WTC11 (cell line): ENCODE measurements at regions of chr1 and their contacts with region 1.

Region 1: GRCh38 chr1:182962554-182963115 is 9.7 kb upstream of the SHCBP1L start:
- DNase-seq: peak; percentile 69
- ATAC-seq: peak; percentile 87
- H3K4me3 Mint-ChIP-seq: peak overlapping the region; percentile 5; the same call in 1 of the 2 replicates
- H3K27ac Mint-ChIP-seq: peak overlapping the region; percentile 84
- H3K4me1 Mint-ChIP-seq: peaks cover 34% of the 10 kb centered on the region
- H3K27me3 Mint-ChIP-seq: peaks cover 12% of the 10 kb centered on the region
- CTCF ChIP-seq: peak; percentile 64

Region 2: DNA sequence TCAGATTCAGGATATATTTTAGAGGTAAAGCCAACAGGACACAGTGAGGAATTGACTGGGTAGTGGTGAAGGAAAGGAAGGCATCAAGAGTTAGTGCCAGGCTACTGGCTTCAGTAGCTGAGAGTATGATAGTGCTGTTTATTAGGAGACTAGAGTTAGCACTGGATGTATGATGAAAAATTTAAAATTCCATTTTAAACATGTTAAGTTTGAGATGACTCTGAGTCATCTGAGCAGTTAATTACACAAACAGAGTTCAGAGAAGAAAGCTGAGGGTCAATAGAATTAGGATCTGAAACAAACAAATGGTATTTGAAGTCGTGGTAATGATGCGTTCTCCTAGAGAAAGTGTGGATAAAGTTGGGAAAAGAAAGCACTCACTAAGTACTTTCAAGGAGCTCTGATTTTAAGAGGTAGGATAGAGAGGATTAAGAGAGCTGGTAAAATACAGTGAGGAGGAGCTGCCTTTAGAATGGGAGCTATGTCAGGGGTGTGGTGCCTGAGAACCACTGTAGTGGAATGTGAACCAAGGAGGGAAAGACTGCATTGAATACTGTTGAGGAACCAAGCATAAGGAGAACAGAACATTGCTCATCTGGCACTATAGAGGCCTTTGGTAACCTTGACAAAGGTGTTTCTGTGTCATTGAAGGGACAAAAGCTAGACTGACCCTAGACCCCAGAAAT is 12.0 kb after region 1 on chr1:
- CTCF ChIA-PET with region 1: interaction called, 17 read pairs
- POLR2A ChIA-PET with region 1: no interaction called
- DNase-seq: no peak
- ATAC-seq: peak; percentile 69
- H3K4me3 Mint-ChIP-seq: no peak overlapping the region
- H3K27ac Mint-ChIP-seq: no peak overlapping the region
- H3K4me1 Mint-ChIP-seq: 0 out of 2 replicates have a peak, but pooled peaks cover 2% of the 10 kb centered on the region
- H3K27me3 Mint-ChIP-seq: no peaks in the 10 kb centered on the region
- CTCF ChIP-seq: no peak

Region 3: DNA sequence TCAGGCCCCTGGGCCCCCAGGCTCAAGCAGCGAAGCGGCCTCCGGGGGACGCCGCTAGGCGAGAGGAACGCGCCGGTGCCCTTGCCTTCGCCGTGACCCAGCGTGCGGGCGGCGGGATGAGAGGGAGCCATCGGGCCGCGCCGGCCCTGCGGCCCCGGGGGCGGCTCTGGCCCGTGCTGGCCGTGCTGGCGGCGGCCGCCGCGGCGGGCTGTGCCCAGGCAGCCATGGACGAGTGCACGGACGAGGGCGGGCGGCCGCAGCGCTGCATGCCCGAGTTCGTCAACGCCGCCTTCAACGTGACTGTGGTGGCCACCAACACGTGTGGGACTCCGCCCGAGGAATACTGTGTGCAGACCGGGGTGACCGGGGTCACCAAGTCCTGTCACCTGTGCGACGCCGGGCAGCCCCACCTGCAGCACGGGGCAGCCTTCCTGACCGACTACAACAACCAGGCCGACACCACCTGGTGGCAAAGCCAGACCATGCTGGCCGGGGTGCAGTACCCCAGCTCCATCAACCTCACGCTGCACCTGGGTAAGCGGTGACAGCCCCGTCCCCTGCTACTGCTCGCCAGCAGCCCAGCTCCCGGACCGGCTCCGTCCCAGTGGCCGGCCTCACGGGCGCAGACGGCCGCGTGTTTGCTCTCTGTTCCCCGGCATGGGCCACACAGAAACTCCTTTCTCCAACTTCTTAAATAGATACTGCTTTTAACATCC is 61.1 kb after region 1 on chr1:
- CTCF ChIA-PET with region 1: interaction called, 15 read pairs
- POLR2A ChIA-PET with region 1: interaction called, 3 read pairs
- DNase-seq: peak; percentile 87
- ATAC-seq: peak; percentile 72
- H3K4me3 Mint-ChIP-seq: peak overlapping the region; percentile 92
- H3K27ac Mint-ChIP-seq: peak overlapping the region; percentile 15; the same call in 1 of the 2 replicates
- H3K4me1 Mint-ChIP-seq: peaks cover 62% of the 10 kb centered on the region
- H3K27me3 Mint-ChIP-seq: peaks cover 9% of the 10 kb centered on the region
- CTCF ChIP-seq: no peak

Region 4: GRCh38 chr1:183227963-183228649 is 265.5 kb after region 1 on chr1:
- CTCF ChIA-PET with region 1: interaction called, 29 read pairs
- POLR2A ChIA-PET with region 1: no interaction called
- DNase-seq: peak; percentile 85
- ATAC-seq: peak; percentile 95
- H3K4me3 Mint-ChIP-seq: no peak overlapping the region
- H3K27ac Mint-ChIP-seq: no peak overlapping the region
- H3K4me1 Mint-ChIP-seq: peaks cover 26% of the 10 kb centered on the region
- H3K27me3 Mint-ChIP-seq: no peaks in the 10 kb centered on the region
- CTCF ChIP-seq: peak; percentile 60